Cardiac septum (tissue), 1 donor: ENCODE measurements at regions of chr1 and their contacts with region 1.

Region 1: DNA sequence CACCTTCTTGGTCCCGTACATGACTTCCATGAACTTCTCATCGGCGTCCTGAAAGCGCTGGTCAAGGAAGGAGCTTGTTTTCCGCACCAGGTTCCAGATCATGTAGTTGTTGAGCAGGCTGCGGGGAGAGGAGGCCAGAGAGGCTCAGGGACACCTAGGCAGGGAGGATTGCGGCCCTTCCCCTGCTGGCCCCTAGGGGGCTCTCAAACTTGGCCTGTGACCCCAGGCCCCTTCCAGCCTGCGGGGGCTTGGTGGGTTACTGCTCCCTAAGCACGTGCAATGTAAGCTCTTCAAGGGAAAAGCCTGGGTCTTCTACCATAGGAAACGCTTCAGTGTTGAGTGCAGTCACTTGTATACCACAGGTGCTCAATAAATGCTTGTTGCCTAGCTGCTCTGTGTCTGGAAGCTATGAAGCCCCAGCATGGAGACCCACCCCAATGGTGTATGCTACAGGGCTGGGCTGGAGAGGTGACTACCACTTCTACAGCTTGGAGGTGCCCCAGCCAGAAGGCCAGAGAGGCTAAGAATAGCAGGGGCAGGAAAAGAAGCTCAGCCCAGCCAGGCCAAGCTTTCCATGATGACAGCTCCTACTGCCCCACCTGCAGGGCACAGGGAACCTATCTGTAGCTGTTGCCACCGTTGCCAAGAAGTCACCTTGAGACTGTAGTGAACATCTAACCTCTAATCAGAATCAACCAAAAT is 45.1 kb downstream of the ECE1 start:
- DNase-seq: no peak

Region 2: DNA sequence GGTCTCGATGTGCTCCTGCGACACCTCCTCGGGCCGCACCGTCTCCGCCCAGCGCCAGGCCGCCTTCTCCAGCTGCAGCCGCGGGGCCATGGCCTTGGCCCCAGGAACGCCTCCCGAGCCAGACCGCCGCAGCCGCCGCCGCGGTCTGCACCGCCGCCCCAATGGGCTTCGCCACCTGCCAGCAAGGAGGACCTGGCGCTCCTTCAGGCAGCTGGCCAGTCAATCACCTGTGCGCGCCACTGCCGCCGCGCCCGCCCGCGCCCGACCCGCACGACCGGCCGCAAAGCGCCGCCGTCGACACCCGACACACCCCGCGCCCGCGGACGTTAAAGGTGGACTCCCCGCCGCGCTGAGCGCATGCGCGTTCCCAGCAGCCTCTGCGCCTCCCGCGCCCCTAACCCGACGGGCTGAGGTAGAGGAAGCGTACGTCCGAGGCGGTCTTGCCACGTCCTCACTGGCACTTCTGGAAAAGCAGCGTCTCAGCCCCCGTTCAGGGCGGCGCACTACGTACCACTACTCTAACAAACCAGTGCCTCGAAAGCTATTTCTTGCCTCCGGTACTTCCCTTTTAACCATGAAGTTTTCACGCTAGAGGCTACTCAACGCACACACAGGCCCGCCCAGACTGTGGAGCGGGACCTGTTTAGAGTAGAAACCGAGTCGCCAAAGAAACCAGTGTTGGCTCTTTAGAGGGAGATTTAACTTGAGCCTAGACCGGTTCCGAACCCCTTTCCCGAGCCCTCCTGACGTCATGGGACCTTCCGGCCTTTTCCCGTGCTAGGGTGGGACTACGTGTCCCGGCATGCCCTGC is 537.9 kb after region 1 on chr1 and contains the start of gene USP48:
- intact Hi-C with region 1: loop called (anchors 10 kb)
- DNase-seq: peak; percentile 99
- total RNA-seq, gene USP48: 41.3 TPM